Activated CD8-positive, alpha-beta T cell treated with anti-CD3 and anti-CD28 coated beads for 36 hours (primary cell): ENCODE measurements at regions of chr5 and their contacts with region 1.

Region 1: DNA sequence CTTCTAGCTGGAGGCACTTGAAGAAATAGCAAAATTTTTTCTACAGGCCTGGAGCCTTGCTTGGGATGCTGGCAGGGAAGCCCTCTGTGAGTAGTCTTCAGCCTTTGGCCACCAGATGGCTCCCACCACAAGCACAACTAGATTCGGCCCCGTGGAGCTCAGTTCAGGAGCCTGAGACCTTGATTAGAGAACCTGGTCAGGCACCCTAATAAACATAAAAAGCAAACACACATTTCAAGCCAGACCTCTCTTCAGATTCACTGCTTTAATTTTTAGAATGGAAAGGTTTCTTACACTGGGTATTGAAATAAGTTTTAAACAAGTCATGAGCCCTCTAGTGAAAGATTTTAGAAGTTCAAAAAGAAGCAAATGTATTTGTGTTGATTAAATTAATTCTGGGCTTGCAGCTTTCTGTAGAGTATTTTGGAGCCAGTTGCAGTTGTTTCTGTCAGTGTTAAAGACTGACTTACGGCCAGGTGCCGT is 41.4 kb downstream of the GLRX start:
- DNase-seq: peak; percentile 86
- ATAC-seq: peak; percentile 98
- H3K4me3 Mint-ChIP-seq: peak overlapping the region; percentile 38
- H3K27ac Mint-ChIP-seq: peak overlapping the region; percentile 71
- H3K4me1 Mint-ChIP-seq: peaks cover 7% of the 10 kb centered on the region
- H3K27me3 Mint-ChIP-seq: peaks cover 2% of the 10 kb centered on the region
- CTCF ChIP-seq: peak; percentile 99

Region 2: DNA sequence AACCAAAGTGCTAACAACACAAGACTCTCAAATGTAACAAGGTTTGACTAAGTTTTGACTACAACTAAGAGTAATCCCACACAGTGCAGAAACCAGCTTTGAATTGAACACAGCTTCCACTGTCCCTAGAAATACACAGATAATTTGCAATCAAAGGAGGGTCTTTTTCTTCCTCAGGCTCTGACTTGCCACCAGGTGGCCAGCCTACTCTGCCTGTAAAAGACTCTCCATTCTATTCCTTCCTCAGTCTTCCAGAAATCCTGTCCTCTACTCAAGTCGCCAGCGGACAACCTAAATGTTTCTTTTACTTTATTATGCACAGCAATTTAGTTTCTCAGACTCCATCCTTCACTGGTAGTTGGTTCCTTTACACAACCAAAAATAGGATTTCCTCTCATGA is 464.1 kb before region 1 on chr5:
- CTCF ChIA-PET with region 1: no interaction called
- POLR2A ChIA-PET with region 1: no interaction called
- intact Hi-C with region 1: no loop called
- DNase-seq: no peak
- ATAC-seq: no peak
- H3K4me3 Mint-ChIP-seq: no peak overlapping the region
- H3K27ac Mint-ChIP-seq: no peak overlapping the region
- H3K4me1 Mint-ChIP-seq: no peaks in the 10 kb centered on the region
- H3K27me3 Mint-ChIP-seq: peaks cover 5% of the 10 kb centered on the region
- CTCF ChIP-seq: no peak

Region 3: DNA sequence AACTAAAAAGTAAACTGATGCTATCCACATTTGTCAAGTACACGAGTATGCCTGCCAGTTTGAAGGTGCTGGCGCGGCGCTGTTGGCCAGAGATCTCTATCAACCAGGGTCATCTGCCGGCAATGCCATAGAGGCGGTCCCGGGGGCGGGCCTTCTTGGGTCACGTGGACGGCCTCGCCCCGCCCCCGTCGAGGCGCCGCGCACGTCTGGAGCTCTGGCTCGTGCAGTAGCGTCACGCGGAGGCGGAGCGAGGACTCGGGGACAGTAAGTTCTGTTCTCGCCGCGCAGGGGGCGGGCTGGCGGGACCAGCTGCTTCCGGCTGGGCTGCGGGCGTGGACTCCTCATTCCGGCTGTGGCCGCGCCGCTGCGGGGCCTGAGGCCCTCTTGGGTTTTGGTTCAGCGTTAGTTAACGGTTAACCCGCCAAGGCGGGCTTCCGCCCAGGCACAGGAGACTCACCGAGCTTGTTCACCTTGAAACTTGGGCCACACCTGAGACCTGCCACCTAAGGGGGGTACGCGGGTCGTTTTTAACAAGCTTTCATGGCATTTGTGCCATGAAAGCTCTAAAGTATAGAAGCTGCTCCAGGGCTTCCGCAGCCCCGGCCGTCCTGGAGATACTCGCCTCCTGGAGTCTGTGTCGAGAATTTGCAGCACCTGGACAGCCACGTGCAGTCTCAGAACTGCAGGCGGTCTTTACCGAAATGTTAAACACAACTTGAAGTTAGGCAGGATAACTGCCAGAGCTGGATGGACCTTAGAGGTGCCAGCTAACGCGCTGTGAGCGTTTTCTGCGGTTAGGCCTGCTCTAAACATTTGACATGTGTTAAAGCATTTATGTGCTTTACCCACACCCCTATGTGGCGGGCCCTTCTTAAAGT is 134.3 kb before region 1 on chr5 and contains the start of gene RFESD:
- CTCF ChIA-PET with region 1: interaction called, 88 read pairs
- POLR2A ChIA-PET with region 1: interaction called, 6 read pairs
- intact Hi-C with region 1: no loop called
- DNase-seq: peak; percentile 99
- ATAC-seq: peak; percentile 95
- H3K4me3 Mint-ChIP-seq: peak within 1 kb of the TSS; percentile 81
- H3K27ac Mint-ChIP-seq: peak within 1 kb of the TSS; percentile 90
- H3K4me1 Mint-ChIP-seq: peaks cover 36% of the 10 kb centered on the region
- H3K27me3 Mint-ChIP-seq: no peaks in the 10 kb centered on the region
- CTCF ChIP-seq: no peak
- total RNA-seq, gene RFESD: 9.2 to 9.8 TPM

Region 4: GRCh38 chr5:95730730-95731570 is 50.2 kb before region 1 on chr5 and contains the start of gene RHOBTB3:
- CTCF ChIA-PET with region 1: interaction called, 13 read pairs
- POLR2A ChIA-PET with region 1: no interaction called
- intact Hi-C with region 1: no loop called
- DNase-seq: peak; percentile 37
- ATAC-seq: peak; percentile 62
- H3K4me3 Mint-ChIP-seq: peak within 1 kb of the TSS; percentile 72
- H3K27ac Mint-ChIP-seq: no peak within 1 kb of the TSS
- H3K4me1 Mint-ChIP-seq: peaks cover 15% of the 10 kb centered on the region
- H3K27me3 Mint-ChIP-seq: peaks cover 39% of the 10 kb centered on the region
- CTCF ChIP-seq: no peak
- total RNA-seq, gene RHOBTB3: 0.50 to 1.1 TPM

Region 5: DNA sequence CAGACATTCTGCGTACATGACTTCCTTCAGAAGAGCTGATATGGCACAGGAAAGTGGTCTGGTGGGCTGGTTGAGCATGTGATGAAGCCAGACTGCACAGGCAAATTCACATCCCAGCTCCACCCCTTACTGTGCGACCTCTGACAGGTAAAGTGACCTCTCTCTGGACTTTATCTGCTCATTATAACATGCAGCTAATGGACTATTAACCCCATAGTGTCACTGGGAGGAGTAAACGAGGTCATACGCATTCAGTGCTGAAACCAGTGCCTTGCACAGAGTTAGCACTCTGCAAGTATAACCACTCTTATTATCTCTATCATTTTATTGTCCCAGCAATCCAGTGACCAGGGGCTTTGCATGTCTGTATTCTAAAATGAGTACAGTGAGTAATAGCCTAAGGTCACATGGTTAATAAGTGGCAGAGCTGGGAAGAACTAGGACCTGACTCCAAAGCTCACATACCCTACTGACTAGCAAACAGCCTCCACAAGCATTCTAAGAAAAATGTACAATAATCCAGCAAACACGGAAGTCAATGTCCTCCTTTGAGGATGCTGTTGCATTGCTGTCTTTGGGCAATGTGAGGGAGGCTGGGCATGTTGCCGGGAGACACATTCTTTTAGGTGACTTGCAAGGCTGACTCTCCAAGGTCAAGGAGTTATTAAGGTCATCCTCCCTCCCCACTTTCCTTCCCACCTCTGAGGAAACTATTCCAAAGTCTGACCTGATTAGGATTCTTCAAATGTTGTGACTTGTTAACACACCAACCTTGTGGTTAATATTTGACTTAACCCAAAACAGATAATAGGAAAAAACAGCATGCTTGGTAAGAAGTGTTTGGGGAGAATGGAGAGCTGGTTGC is 22.4 kb after region 1 on chr5:
- CTCF ChIA-PET with region 1: interaction called, 58 read pairs
- POLR2A ChIA-PET with region 1: no interaction called
- intact Hi-C with region 1: no loop called
- DNase-seq: no peak
- ATAC-seq: no peak
- H3K4me3 Mint-ChIP-seq: no peak overlapping the region
- H3K27ac Mint-ChIP-seq: no peak overlapping the region
- H3K4me1 Mint-ChIP-seq: peaks cover 9% of the 10 kb centered on the region
- H3K27me3 Mint-ChIP-seq: no peaks in the 10 kb centered on the region
- CTCF ChIP-seq: no peak

Region 6: GRCh38 chr5:95822542-95823181 is 41.5 kb after region 1 on chr5 and contains the start of gene GLRX:
- CTCF ChIA-PET with region 1: interaction called, 94 read pairs
- POLR2A ChIA-PET with region 1: interaction called, 3 read pairs
- intact Hi-C with region 1: no loop called
- DNase-seq: peak; percentile 73
- ATAC-seq: peak; percentile 15
- H3K4me3 Mint-ChIP-seq: peak within 1 kb of the TSS; percentile 87
- H3K27ac Mint-ChIP-seq: peak within 1 kb of the TSS; percentile 93
- H3K4me1 Mint-ChIP-seq: peaks cover 44% of the 10 kb centered on the region
- H3K27me3 Mint-ChIP-seq: no peaks in the 10 kb centered on the region
- CTCF ChIP-seq: no peak
- total RNA-seq, gene GLRX: 28.4 to 32.6 TPM

Region 7: GRCh38 chr5:95858661-95859326 is 77.7 kb after region 1 on chr5:
- CTCF ChIA-PET with region 1: interaction called, 628 read pairs
- POLR2A ChIA-PET with region 1: no interaction called
- intact Hi-C with region 1: no loop called
- DNase-seq: peak; percentile 97
- ATAC-seq: peak; percentile 97
- H3K4me3 Mint-ChIP-seq: peak overlapping the region; percentile 31
- H3K27ac Mint-ChIP-seq: peak overlapping the region; percentile 66
- H3K4me1 Mint-ChIP-seq: peaks cover 45% of the 10 kb centered on the region
- H3K27me3 Mint-ChIP-seq: no peaks in the 10 kb centered on the region
- CTCF ChIP-seq: peak; percentile 92